ENCODE measurements at regions of chr10 and their contacts with region 1.

Region 1: DNA sequence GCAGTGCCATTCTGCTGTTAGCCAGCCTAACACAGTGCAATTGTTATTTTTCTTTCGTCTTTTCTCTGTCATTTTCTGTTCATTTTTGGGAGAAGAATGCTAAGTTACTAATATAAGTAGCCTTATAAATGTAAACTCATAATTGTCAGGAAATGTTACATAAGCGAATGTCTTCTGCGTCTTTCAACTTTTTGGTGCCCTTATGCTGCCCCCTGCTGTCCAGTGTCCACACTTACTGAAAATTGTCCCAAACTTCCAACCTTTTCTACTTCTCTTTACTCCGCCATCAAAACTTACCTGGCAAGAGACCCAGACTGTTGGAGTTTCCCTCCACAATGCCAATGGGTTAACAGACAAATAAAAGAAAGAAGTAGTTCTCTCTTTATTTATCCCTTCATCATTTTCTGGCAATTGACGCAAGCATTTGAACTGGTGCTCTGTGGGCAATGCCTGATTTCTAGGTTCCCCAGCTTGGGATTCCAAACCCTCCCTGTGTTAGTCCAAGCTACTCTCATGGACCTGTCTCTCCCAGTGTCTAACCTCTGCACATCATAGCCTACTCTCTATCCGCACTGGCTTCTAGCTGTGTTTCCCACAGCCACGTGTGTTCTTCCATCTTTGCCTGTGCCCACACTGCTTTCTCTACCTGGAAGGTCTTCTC is 21.0 kb upstream of the EPC1 start:
- DNase-seq: peak; percentile 88
- H3K4me3 Mint-ChIP-seq: peak overlapping the region; percentile 41
- H3K27ac Mint-ChIP-seq: peak overlapping the region; percentile 59
- H3K4me1 Mint-ChIP-seq: peaks cover 65% of the 10 kb centered on the region
- H3K27me3 Mint-ChIP-seq: no peaks in the 10 kb centered on the region

Region 2: DNA sequence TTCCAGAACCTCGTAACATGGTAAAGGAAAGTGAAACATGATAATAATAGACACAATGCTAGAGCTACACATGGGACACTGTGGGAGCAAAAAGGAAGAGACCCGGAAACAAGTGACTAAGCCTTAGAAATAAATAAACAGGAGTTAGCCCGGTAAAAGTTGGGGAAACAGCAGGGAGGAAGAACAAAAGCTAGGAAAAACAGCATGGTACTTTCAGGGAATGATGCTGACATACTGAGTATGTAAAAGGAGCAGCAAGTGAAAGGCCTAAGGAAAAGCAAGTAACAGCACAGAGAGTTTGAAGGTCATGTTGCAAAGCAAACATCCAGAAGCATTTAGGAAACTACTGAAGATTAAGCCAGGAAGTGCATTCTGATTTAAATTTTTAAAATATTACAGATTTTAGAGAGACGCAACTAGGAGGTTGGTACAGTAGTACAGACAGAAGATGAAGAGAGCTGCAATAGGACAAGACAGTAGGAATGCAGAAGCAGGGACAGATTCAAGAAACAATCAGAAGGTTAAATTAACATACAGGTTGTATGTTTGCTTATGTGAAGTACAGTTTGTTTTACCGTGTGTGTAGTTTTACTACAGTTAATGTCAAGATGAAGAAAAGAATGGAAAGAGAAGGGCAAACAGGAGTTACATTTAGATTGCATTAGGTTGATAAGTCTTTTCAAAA is 502.9 kb before region 1 on chr10:
- CTCF ChIA-PET with region 1: no interaction called
- intact Hi-C with region 1: loop called (anchors 5 kb)
- DNase-seq: no peak
- H3K4me3 Mint-ChIP-seq: no peak overlapping the region
- H3K27ac Mint-ChIP-seq: no peak overlapping the region
- H3K4me1 Mint-ChIP-seq: peaks cover 21% of the 10 kb centered on the region
- H3K27me3 Mint-ChIP-seq: no peaks in the 10 kb centered on the region

Region 3: GRCh38 chr10:32171204-32171603 is 196.7 kb before region 1 on chr10:
- CTCF ChIA-PET with region 1: no interaction called
- intact Hi-C with region 1: no loop called
- DNase-seq: no peak
- H3K4me3 Mint-ChIP-seq: no peak overlapping the region
- H3K27ac Mint-ChIP-seq: no peak overlapping the region
- H3K4me1 Mint-ChIP-seq: no peaks in the 10 kb centered on the region
- H3K27me3 Mint-ChIP-seq: no peaks in the 10 kb centered on the region

Region 4: GRCh38 chr10:32207544-32207943 is 160.4 kb before region 1 on chr10:
- CTCF ChIA-PET with region 1: interaction called, 4 read pairs
- intact Hi-C with region 1: loop called (anchors 1 kb)
- DNase-seq: peak; percentile 74
- H3K4me3 Mint-ChIP-seq: no peak overlapping the region
- H3K27ac Mint-ChIP-seq: no peak overlapping the region
- H3K4me1 Mint-ChIP-seq: peaks cover 3% of the 10 kb centered on the region
- H3K27me3 Mint-ChIP-seq: peaks cover 2% of the 10 kb centered on the region

Region 5: DNA sequence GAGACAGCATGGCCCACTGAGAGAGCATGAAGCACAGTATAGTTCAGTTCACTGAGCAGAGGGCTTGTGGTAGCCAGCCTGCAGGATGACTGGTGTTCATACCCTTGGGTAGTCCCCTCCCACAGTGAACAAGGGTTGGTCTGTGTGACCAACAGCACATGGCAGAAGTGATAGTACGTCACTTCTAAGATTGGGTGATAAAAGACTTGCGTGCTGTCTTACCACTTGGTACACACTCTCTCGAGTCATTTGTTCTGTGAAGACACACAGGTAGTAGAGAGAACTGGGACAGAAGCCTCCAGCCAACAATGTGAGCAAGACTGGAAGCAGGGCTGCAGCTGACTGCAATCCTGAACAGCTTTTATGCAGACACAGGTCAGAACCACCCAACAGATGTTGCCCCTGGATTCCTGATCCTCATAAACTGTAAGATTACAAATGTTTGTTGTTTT is 35.6 kb before region 1 on chr10:
- CTCF ChIA-PET with region 1: interaction called, 6 read pairs
- intact Hi-C with region 1: loop called (anchors 1 kb)
- DNase-seq: peak; percentile 89
- H3K4me3 Mint-ChIP-seq: peak overlapping the region; percentile 55
- H3K27ac Mint-ChIP-seq: peak overlapping the region; percentile 90
- H3K4me1 Mint-ChIP-seq: peaks cover 94% of the 10 kb centered on the region
- H3K27me3 Mint-ChIP-seq: no peaks in the 10 kb centered on the region

Region 6: GRCh38 chr10:32378363-32379317 is 10.7 kb after region 1 on chr10:
- CTCF ChIA-PET with region 1: interaction called, 11 read pairs
- intact Hi-C with region 1: no loop called
- DNase-seq: peak; percentile 97
- H3K4me3 Mint-ChIP-seq: no peak overlapping the region
- H3K27ac Mint-ChIP-seq: no peak overlapping the region
- H3K4me1 Mint-ChIP-seq: peaks cover 13% of the 10 kb centered on the region
- H3K27me3 Mint-ChIP-seq: no peaks in the 10 kb centered on the region

Region 7: DNA sequence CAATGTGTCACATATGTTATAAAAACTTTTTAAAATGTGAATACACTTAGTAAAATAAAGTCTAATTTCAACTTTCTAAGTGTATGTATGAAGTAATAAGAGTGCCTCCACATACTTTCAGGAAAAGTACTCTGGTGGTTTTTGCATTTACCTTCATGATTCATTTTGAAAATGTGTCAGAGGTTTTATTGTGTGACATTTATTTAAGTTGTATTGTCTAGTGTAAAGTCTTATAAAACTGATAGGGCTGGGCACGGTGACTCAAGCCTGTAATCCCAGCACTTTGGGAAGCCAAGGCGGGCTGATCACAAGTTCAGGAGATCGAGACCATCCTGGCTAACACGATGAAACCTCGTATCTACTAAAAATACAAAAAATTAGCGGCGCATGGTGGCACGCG is 363.6 kb after region 1 on chr10:
- CTCF ChIA-PET with region 1: no interaction called
- intact Hi-C with region 1: no loop called
- DNase-seq: no peak
- H3K4me3 Mint-ChIP-seq: no peak overlapping the region
- H3K27ac Mint-ChIP-seq: no peak overlapping the region
- H3K4me1 Mint-ChIP-seq: no peaks in the 10 kb centered on the region
- H3K27me3 Mint-ChIP-seq: no peaks in the 10 kb centered on the region

Measured in activated naive CD4-positive, alpha-beta T cell treated with anti-CD3 and anti-CD28 coated beads for 36 hours (primary cell).